Activated T-helper 1 cell treated with anti-CD3 and anti-CD28 coated beads, Interleukin-12 subunit alpha, Interleukin-12 subunit beta, Interleukin-2, Interleukin-4 antibody, amounts not matched to agents 30 ng/mL and 10 ng/mL and 1 ng/mL, durations not matched to agents 14 hours and 24 hours and 36 hours (primary cell): ENCODE measurements at regions of chr5 and their contacts with region 1.

Region 1: DNA sequence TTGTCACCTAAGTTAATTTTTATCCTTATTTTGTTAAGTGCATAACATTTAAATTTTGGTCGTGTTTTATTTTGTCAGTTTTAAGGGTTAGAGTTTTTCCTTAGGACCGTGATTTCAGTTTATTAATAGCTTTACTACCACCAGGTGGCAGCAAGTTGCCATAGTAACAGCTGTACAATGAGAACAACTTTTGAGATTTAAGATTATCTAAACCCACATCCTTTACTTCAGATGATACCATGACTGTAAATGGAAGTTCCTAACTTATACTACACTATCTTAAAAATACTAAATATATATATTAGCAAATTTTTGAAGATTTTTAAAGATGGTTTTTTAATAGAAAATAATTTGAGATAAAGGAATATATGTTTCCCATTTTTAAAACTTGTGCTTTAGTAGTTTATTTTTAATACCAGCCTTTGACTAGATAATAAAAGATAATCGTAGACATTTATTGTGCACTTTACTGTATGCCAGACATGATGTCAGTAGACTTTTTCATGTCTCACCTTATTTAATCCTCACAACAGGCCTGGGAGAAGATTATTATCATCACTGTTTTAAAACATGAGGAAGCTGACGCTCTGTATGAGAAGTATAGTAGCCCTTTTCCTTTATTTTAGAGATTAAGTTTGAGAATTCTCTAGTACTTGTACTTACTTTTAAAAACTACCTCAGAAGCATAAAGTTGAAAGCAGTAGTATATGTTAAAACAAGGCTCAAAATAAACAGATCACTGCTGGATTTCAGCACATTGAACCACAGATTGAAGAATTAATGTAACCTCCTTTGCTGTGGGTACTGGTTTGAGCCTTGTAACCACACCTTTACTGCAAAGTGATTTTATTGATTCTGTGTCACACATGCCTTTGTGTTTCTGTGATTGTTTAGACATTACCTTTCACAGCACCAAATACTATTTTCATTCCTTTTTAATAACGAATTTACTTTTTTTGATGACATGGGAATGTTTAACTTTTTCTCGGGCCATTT is 27.5 kb downstream of the SREK1 start:
- DNase-seq: peak; percentile 30
- H3K4me3 Mint-ChIP-seq: no peak overlapping the region
- H3K27ac Mint-ChIP-seq: peak overlapping the region; percentile 40
- H3K4me1 Mint-ChIP-seq: peaks cover 29% of the 10 kb centered on the region
- H3K27me3 Mint-ChIP-seq: no peaks in the 10 kb centered on the region

Region 2: GRCh38 chr5:65742565-65743231 is 428.9 kb before region 1 on chr5:
- intact Hi-C with region 1: loop called (anchors 1 kb)
- DNase-seq: no peak
- H3K4me3 Mint-ChIP-seq: no peak overlapping the region
- H3K27ac Mint-ChIP-seq: no peak overlapping the region
- H3K4me1 Mint-ChIP-seq: peaks cover 16% of the 10 kb centered on the region
- H3K27me3 Mint-ChIP-seq: peaks cover 3% of the 10 kb centered on the region

Region 3: DNA sequence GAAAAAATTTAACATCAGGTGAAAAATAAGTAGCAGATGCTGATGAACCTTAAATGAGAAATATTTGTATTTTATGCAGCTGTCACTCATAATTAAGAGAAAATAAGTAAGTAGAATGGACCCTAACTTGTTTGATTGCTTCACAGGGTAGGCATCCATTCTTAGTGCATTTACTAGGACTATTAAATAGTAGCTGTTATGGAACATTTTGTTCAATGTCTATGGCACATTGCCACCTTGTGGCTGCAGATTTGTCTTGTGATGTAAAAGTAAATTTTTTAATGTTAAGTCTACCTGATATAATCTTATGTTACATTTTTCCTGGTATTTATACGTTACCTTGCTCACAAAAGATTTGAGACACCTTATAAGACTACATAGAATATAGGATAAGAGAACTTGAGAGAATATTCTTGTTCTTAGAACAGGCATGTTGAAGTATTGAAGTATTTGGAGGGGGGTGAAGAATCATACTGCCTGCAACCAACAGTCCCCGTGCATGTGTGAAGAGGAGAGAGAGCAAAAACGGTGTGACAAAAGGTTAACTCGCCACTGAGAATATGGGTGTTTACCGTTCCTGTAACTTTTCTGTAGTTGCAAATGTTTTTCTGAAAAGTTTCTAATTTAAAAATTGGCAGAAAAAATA is 585.7 kb after region 1 on chr5:
- intact Hi-C with region 1: loop called (anchors 2 kb)
- DNase-seq: no peak
- H3K4me3 Mint-ChIP-seq: no peak overlapping the region
- H3K27ac Mint-ChIP-seq: no peak overlapping the region
- H3K4me1 Mint-ChIP-seq: no peaks in the 10 kb centered on the region
- H3K27me3 Mint-ChIP-seq: peaks cover 26% of the 10 kb centered on the region